CD4-positive, alpha-beta T cell (primary cell): ENCODE measurements at regions of chr1 and their contacts with region 1.

Region 1: DNA sequence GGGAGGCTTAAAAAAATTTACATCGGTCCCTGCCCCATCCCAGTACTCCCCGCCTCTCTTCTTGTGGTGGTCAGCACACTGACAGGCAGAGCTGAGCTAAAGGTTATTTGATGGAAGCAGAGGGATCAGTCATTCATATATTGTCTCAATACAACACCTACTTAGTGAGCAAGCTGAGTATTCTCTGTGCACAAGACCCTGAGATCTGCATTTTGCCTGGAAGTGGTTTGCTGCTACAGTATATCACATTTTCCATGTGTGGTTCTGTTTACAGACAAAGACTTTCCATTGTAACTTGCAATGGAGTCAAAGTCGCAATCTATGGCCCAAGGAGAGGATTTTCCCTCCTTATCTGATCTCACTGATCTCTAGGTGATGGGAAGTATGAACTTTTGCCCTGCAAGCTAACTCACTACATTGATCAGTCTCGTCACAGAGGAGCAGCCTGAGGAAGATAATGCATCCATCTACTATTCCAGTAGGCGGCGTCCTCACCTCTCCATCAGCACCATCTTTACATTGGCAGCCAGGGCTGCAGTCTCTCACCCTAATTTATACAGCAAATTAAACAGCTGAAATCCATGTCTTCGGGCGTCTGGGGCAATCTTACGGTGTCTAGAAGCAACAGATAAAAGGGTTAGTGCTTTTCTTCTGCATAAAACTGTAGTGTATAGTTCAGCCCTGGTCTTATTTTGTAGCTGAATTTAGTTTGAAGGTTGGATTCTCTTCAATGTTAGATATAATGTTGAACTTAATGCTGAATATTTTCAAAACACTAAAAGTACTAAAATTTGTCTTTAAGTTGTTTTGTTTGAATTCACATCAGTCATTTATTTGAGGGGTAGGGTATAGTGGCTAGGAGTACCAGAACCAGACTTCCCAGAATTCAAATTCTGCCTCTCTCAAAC is 3.2 kb upstream of the TRAF5 start:
- DNase-seq: peak; percentile 46 to 86 (median 60)
- ATAC-seq: peak; percentile 71
- H3K4me3 ChIP-seq: no peak overlapping the region
- H3K4me3 Mint-ChIP-seq: peak overlapping the region; percentile 55
- H3K27ac ChIP-seq: no peak overlapping the region
- H3K27ac Mint-ChIP-seq: no peak overlapping the region
- H3K4me1 ChIP-seq: peaks cover 29% of the 10 kb centered on the region
- H3K4me1 Mint-ChIP-seq: peaks cover 47% of the 10 kb centered on the region
- H3K27me3 ChIP-seq: no peaks in the 10 kb centered on the region
- H3K27me3 Mint-ChIP-seq: no peaks in the 10 kb centered on the region
- CTCF ChIP-seq: peak; percentile 93

Region 2: GRCh38 chr1:211335522-211336157 is 12.2 kb after region 1 on chr1:
- CTCF ChIA-PET with region 1: interaction called, 25 read pairs
- POLR2A ChIA-PET with region 1: interaction called, 44 read pairs
- intact Hi-C with region 1: no loop called
- DNase-seq: peak in 3 of 14 experiments; percentile 39 to 61 (median 52)
- ATAC-seq: peak; percentile 62
- H3K4me3 ChIP-seq: peak overlapping the region; percentile 30
- H3K4me3 Mint-ChIP-seq: peak overlapping the region; percentile 68
- H3K27ac ChIP-seq: peak overlapping the region; percentile 57 to 60
- H3K27ac Mint-ChIP-seq: peak overlapping the region; percentile 83
- H3K4me1 ChIP-seq: peaks cover 98% of the 10 kb centered on the region
- H3K4me1 Mint-ChIP-seq: peaks cover 84% of the 10 kb centered on the region
- H3K27me3 ChIP-seq: no peaks in the 10 kb centered on the region
- H3K27me3 Mint-ChIP-seq: no peaks in the 10 kb centered on the region
- CTCF ChIP-seq: no peak

Region 3: GRCh38 chr1:211352985-211353515 is 29.6 kb after region 1 on chr1:
- CTCF ChIA-PET with region 1: interaction called, 13 read pairs
- POLR2A ChIA-PET with region 1: interaction called, 7 read pairs
- intact Hi-C with region 1: loop called in 1 of 2 experiments (anchors 1 kb)
- DNase-seq: peak in 13 of 14 experiments; percentile 32 to 87 (median 56)
- ATAC-seq: peak; percentile 85
- H3K4me3 ChIP-seq: peak overlapping the region; percentile 28
- H3K4me3 Mint-ChIP-seq: peak overlapping the region; percentile 86
- H3K27ac ChIP-seq: peak overlapping the region; percentile 11 to 15
- H3K27ac Mint-ChIP-seq: peak overlapping the region; percentile 87
- H3K4me1 ChIP-seq: peaks cover 52% of the 10 kb centered on the region
- H3K4me1 Mint-ChIP-seq: peaks cover 71% of the 10 kb centered on the region
- H3K27me3 ChIP-seq: no peaks in the 10 kb centered on the region
- H3K27me3 Mint-ChIP-seq: no peaks in the 10 kb centered on the region
- CTCF ChIP-seq: peak; percentile 58

Region 4: DNA sequence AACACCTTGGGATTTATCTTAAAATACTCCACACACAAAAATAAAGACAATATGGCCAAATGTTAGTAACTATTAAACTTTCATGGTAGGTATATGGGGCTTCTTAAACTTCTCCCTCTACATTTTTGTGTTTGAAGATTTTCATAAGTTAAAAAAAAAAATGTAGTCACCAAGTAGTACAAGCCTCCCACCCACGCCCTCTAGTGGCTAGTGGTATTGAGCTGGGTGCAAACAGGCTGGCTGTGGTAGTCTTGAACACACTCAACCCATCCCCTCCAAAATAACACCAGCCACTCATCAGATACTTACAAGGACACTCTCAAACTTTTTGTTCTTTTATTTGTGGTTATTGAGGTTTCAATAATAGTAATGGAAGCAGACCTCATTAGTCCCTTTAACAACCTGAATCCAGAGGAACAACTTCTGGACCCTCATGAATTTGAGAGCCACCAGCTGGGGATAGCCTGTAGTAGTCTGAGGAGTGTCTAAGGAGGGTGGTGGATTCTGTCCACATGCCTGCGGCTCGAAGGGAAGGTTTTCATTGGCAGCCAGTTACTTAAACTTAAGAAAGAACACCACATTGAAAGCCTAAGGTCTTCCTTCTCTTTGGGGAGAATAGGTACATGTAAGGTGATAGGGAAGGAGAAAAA is 152.9 kb after region 1 on chr1:
- CTCF ChIA-PET with region 1: interaction called, 22 read pairs
- POLR2A ChIA-PET with region 1: interaction called, 5 read pairs
- intact Hi-C with region 1: loop called (anchors 1 kb)
- DNase-seq: peak; percentile 62 to 85 (median 76)
- ATAC-seq: peak; percentile 85
- H3K4me3 ChIP-seq: no peak overlapping the region
- H3K4me3 Mint-ChIP-seq: no peak overlapping the region
- H3K27ac ChIP-seq: no peak overlapping the region
- H3K27ac Mint-ChIP-seq: no peak overlapping the region
- H3K4me1 ChIP-seq: no peaks in the 10 kb centered on the region
- H3K4me1 Mint-ChIP-seq: peaks cover 4% of the 10 kb centered on the region
- H3K27me3 ChIP-seq: peaks cover 0 to 3% of the 10 kb centered on the region in 2 experiments
- H3K27me3 Mint-ChIP-seq: peaks cover 24% of the 10 kb centered on the region
- CTCF ChIP-seq: peak; percentile 91

Region 5: GRCh38 chr1:211654838-211655787 is 331.7 kb after region 1 on chr1:
- CTCF ChIA-PET with region 1: no interaction called
- POLR2A ChIA-PET with region 1: no interaction called
- intact Hi-C with region 1: loop called (anchors 1 to 2 kb)
- DNase-seq: peak; percentile 68 to 88 (median 78)
- ATAC-seq: peak; percentile 98
- H3K4me3 ChIP-seq: no peak overlapping the region
- H3K4me3 Mint-ChIP-seq: no peak overlapping the region
- H3K27ac ChIP-seq: no peak overlapping the region
- H3K27ac Mint-ChIP-seq: no peak overlapping the region
- H3K4me1 ChIP-seq: peaks cover 5% of the 10 kb centered on the region
- H3K4me1 Mint-ChIP-seq: no peaks in the 10 kb centered on the region
- H3K27me3 ChIP-seq: no peaks in the 10 kb centered on the region
- H3K27me3 Mint-ChIP-seq: no peaks in the 10 kb centered on the region
- CTCF ChIP-seq: peak; percentile 89